ENCODE measurements at regions of chr11 and their contacts with region 1.

Region 1: GRCh38 chr11:105071089-105071732 is 26.1 kb upstream of the CARD16 start:
- DNase-seq: no peak
- ATAC-seq: no peak
- H3K4me3 ChIP-seq: no peak overlapping the region
- H3K27ac ChIP-seq: no peak overlapping the region
- H3K4me1 ChIP-seq: no peaks in the 10 kb centered on the region
- H3K27me3 ChIP-seq: no peaks in the 10 kb centered on the region
- CTCF ChIP-seq: no peak

Region 2: GRCh38 chr11:105106140-105106539 is 34.9 kb after region 1 on chr11:
- CTCF ChIA-PET with region 1: no interaction called
- POLR2A ChIA-PET with region 1: no interaction called
- in situ Hi-C with region 1: no loop called
- intact Hi-C with region 1: loop called (anchors 2 kb)
- DNase-seq: no peak
- ATAC-seq: no peak
- H3K4me3 ChIP-seq: no peak overlapping the region
- H3K27ac ChIP-seq: no peak overlapping the region
- H3K4me1 ChIP-seq: no peaks in the 10 kb centered on the region
- H3K27me3 ChIP-seq: no peaks in the 10 kb centered on the region
- CTCF ChIP-seq: no peak

Region 3: DNA sequence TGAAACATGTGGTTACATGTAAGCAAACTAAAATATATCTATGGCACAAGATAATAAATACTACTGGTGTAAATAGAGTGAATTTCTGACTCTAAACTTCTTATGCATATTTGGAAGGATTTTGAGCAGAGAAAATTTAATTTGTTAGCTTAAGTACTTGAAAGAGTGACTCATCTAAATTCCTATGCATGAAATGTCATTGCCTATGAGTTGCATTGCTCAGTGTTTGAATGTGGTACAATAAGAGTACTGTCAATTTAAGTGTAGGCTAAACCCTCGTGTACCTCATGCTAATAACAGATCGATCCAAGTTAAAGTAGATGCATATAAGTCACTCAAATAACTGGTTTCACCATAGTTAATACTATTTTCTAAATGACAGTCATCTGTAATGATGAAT is 73.7 kb after region 1 on chr11:
- CTCF ChIA-PET with region 1: no interaction called
- POLR2A ChIA-PET with region 1: no interaction called
- in situ Hi-C with region 1: no loop called
- intact Hi-C with region 1: no loop called
- DNase-seq: peak; percentile 62
- ATAC-seq: peak; percentile 78; the same call in 1 of the 2 replicates
- H3K4me3 ChIP-seq: no peak overlapping the region
- H3K27ac ChIP-seq: no peak overlapping the region
- H3K4me1 ChIP-seq: no peaks in the 10 kb centered on the region
- H3K27me3 ChIP-seq: no peaks in the 10 kb centered on the region
- CTCF ChIP-seq: no peak

Region 4: DNA sequence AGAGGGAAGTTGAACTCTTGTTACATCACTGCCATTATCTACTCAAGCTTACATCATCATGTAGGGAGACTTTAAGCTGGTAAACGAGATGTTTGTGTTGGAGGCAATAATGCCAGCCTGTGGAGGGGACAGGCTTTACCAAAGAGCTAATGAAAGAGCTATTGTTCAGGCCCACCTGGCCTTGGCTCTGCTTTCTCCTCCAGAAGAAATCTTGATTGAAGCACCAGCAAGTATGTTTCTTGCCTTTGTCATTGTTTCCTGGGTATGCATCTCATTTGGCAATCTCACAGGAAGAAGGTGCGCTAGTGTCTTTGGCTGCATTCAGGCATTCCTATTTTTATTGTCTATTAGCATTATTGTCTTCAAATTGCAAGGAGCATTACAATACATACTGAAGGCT is 85.0 kb after region 1 on chr11:
- CTCF ChIA-PET with region 1: no interaction called
- POLR2A ChIA-PET with region 1: no interaction called
- in situ Hi-C with region 1: no loop called
- intact Hi-C with region 1: no loop called
- DNase-seq: no peak
- ATAC-seq: no peak
- H3K4me3 ChIP-seq: no peak overlapping the region
- H3K27ac ChIP-seq: no peak overlapping the region
- H3K4me1 ChIP-seq: no peaks in the 10 kb centered on the region
- H3K27me3 ChIP-seq: no peaks in the 10 kb centered on the region
- CTCF ChIP-seq: no peak

Measured in Panc1 (cell line).